AG04449 (cell line): ENCODE measurements at regions of chr2 and their contacts with region 1.

Region 1: GRCh38 chr2:200864176-200864976 is at the start of gene CLK1:
- DNase-seq: no peak
- H3K4me3 ChIP-seq: peak within 1 kb of the TSS; percentile 93
- CTCF ChIP-seq: no peak

Region 2: GRCh38 chr2:200193791-200194190 is 670.6 kb before region 1 on chr2:
- CTCF ChIA-PET with region 1: no interaction called
- POLR2A ChIA-PET with region 1: no interaction called
- DNase-seq: no peak
- H3K4me3 ChIP-seq: no peak overlapping the region
- CTCF ChIP-seq: no peak

Region 3: GRCh38 chr2:200747668-200748618 is 116.4 kb before region 1 on chr2:
- CTCF ChIA-PET with region 1: interaction called, 4 read pairs
- POLR2A ChIA-PET with region 1: interaction called, 11 read pairs
- DNase-seq: peak; percentile 92
- H3K4me3 ChIP-seq: peak overlapping the region; percentile 6; the same call in 1 of the 2 replicates
- CTCF ChIP-seq: no peak

Region 4: DNA sequence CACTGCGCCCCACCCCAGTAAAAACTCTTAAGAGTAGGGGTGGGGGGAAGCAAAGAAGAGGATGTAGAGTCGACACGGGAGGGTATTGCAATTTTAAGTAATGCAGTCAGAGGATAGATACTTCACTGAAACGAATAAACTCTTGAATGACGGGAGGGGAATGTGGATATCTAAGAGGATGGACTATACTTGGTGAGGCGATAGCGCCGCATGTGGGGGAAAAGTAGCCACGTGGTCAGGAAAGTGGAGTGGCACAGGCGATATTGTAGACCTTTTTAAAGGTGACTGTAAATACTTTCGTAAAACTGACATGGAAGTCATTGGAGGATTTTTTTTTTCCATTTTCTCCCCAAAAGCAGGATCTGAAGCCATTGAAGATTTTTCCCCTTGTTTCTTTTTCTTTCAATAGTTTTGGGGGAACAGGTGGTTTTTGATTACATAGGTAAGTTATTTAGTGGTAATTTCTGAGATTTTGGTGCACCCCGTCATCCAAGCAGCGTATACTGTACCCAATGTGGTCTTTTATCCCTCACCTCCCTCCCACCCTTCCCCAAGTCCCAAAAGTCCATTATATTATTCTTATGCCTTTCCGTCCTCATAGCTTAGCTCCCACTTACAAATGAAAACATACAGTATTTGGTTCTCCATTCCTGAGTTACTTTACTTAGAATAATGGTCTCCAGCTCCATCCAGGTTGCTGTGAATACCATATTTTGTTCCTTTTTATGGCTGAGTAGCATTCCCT is 13.7 kb before region 1 on chr2:
- CTCF ChIA-PET with region 1: interaction called, 7 read pairs
- POLR2A ChIA-PET with region 1: interaction called, 13 read pairs
- DNase-seq: no peak
- H3K4me3 ChIP-seq: no peak overlapping the region
- CTCF ChIP-seq: no peak

Region 5: DNA sequence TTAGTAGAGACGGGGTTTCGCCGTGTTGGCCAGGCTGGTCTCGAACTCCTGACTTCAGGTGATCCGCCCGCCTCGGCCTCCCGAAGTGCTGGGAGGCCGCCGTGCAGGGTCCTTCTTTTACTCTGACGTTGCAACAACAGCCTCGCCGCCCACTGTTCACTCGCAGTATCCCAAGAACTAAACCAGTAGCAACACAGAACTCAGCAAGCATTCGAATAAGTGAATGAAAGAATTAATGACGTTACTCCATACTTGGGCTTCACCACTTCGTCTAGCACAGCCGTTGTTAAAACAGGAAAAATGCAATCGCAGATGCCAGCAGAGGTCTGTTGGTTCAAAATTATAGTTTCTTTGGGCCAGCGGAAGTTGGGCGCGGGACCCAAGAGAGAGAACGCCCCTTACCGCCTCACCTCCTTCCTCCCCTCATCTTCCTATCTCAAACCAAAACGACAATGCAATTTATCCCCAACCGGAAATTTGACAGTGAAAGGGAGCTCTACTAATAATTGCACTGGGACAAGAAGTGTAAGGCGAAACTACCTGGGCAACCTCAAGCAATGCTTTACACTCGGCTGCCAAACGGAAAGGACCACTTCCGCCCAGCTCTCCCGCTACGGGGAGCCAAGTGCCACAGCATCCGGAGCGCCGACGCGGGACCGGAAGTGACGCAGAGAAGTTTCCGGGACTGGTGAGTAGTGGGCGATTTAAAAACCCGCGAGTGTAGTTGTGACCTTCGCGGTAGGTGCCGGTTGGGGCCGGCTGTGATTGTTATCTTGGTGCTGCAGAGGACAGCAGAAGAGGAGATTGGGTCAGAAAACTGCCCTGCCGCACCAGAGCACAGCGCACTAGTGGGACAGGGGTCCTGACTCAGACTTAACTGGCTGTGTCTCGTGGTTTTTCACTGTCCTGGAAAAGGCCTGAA is 24.6 kb after region 1 on chr2 and contains the starts of genes NIF3L1 and PPIL3:
- CTCF ChIA-PET with region 1: interaction called, 3 read pairs
- POLR2A ChIA-PET with region 1: interaction called, 19 read pairs
- DNase-seq: peak; percentile 77
- H3K4me3 ChIP-seq: peak within 1 kb of the TSS; percentile 72
- CTCF ChIP-seq: peak; percentile 3